A549 (cell line): ENCODE measurements at regions of chr4 and their contacts with region 1.

Region 1: DNA sequence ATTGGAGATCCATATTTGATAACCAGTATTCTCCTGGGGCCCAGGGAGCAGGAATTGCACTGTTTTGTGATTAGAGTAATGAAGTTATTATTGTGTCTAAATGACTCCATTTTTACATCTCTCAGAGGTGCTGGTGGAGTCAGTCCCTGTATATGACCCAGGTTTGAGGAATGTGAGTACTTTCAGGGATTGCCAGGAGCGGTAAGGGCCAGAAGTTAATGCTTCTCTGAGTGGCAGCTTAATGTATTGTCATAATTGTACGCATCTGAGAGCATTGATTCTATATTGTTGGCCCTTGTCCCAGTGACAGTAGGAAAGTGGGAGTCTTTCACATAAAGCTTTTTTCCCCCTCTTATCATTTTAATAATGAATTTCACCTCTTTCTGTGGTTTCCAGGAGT is 146.2 kb downstream of the GATB start:
- DNase-seq: no peak
- ATAC-seq: no peak
- H3K4me3 ChIP-seq: no peak overlapping the region
- H3K27ac ChIP-seq: no peak overlapping the region
- H3K4me1 ChIP-seq: no peaks in the 10 kb centered on the region
- CTCF ChIP-seq: no peak
- EP300 ChIP-seq: no peak
- POLR2A ChIP-seq: no peak
- RAD21 ChIP-seq: no peak

Region 2: DNA sequence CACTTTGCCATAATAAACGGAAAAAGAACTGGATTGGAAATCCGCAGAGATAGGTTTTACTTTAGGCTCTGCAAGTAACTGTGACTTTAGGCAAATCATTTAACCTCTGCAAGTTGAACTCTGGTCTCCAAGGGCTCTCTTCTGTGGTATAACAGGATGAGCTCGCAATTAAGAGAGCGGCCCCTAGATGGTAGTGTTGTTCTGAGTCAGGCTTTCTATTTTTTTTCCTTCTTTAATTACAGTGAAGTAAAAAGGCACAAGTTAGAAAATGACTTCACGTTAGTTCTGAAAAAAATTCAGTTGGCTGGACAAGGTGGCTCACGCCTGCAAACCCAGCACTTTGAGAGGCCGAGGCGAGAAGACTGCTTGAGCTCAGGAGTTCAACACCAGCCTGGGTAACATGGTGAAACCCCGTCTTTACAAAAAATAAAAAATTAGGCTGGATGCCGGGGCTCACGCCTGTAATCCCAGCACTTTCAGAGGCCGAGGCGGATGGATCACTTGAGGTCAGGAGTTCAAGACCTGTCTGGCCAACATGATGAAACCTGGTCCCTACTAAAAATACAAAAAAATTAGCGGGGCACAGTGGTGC is 497.1 kb before region 1 on chr4:
- CTCF ChIA-PET with region 1: interaction called, 13 read pairs
- POLR2A ChIA-PET with region 1: no interaction called
- DNase-seq: peak; percentile 49 to 56
- ATAC-seq: peak; percentile 73 to 78
- H3K4me3 ChIP-seq: no peak overlapping the region
- H3K27ac ChIP-seq: no peak overlapping the region
- H3K4me1 ChIP-seq: no peaks in the 10 kb centered on the region
- CTCF ChIP-seq: peak; percentile 63
- EP300 ChIP-seq: no peak
- POLR2A ChIP-seq: no peak
- RAD21 ChIP-seq: peak; percentile 77 to 80

Region 3: GRCh38 chr4:151581570-151581969 is 33.0 kb before region 1 on chr4:
- CTCF ChIA-PET with region 1: no interaction called
- POLR2A ChIA-PET with region 1: no interaction called
- DNase-seq: no peak
- ATAC-seq: no peak
- H3K4me3 ChIP-seq: no peak overlapping the region
- H3K27ac ChIP-seq: no peak overlapping the region
- H3K4me1 ChIP-seq: no peaks in the 10 kb centered on the region
- CTCF ChIP-seq: no peak
- EP300 ChIP-seq: no peak
- POLR2A ChIP-seq: no peak
- RAD21 ChIP-seq: no peak

Region 4: GRCh38 chr4:151624626-151625565 is 10.3 kb after region 1 on chr4:
- CTCF ChIA-PET with region 1: interaction called, 13 read pairs
- POLR2A ChIA-PET with region 1: no interaction called
- DNase-seq: no peak
- ATAC-seq: no peak
- H3K4me3 ChIP-seq: no peak overlapping the region
- H3K27ac ChIP-seq: no peak overlapping the region
- H3K4me1 ChIP-seq: no peaks in the 10 kb centered on the region
- CTCF ChIP-seq: no peak
- EP300 ChIP-seq: no peak
- POLR2A ChIP-seq: no peak
- RAD21 ChIP-seq: no peak

Region 5: DNA sequence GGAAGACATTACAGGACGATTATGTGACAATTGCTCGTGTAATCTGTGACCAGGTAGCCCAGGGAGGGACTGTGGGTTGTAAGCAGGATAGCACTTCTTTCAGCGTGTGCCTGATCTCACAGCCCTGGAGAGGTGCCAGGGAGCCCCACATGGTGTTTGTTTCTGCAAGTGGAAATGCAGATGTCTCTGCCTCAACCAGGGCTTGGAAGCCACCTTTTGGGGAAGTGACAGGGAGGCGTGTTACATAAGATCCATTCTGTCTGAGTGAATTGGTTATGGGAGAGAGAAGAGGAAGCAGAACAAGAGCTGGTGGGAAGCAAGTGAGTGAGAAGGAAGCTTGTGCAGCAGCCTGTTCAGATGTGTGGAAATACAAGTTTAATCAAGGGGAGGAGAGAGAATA is 250.8 kb after region 1 on chr4:
- CTCF ChIA-PET with region 1: no interaction called
- POLR2A ChIA-PET with region 1: no interaction called
- DNase-seq: no peak
- ATAC-seq: no peak
- H3K4me3 ChIP-seq: no peak overlapping the region
- H3K27ac ChIP-seq: no peak overlapping the region
- H3K4me1 ChIP-seq: no peaks in the 10 kb centered on the region
- CTCF ChIP-seq: no peak
- EP300 ChIP-seq: no peak
- POLR2A ChIP-seq: no peak
- RAD21 ChIP-seq: no peak